CD4-positive, alpha-beta memory T cell (primary cell): ENCODE measurements at regions of chr7 and their contacts with region 1.

Region 1: DNA sequence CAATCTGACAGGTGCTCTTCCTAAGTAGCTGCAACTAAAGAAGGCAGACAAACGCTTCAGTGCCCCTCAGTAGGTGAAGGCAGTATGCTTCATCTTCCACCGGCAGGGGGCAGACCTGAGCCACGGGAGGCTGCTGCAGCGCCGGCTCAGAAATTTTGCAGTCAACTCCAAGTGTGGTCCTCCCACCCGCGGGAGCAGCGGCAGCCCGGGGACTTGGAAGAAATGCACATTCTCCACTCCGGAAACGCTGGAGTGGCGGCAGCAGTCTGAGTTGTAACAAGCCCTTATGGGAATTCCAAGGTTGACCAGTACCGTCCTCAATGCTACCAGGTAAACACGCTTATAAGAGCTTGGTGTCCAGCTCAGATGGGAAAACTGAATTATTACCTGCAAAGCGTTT is 3.4 kb downstream of the IGFBP3 start:
- DNase-seq: peak; percentile 50 to 64 (median 60)
- H3K4me3 ChIP-seq: no peak overlapping the region
- H3K4me3 Mint-ChIP-seq: peak overlapping the region in 4 of 8 donors; percentile 15 to 57 (median 36)
- H3K27ac ChIP-seq: no peak overlapping the region
- H3K27ac Mint-ChIP-seq: no peak overlapping the region
- H3K4me1 ChIP-seq: peaks cover 32% of the 10 kb centered on the region
- H3K4me1 Mint-ChIP-seq: peaks cover 7 to 45% (median 22%) of the 10 kb centered on the region in 4 donors
- H3K27me3 ChIP-seq: peaks cover 9% of the 10 kb centered on the region
- H3K27me3 Mint-ChIP-seq: peaks cover 22 to 30% of the 10 kb centered on the region in 2 donors

Region 2: DNA sequence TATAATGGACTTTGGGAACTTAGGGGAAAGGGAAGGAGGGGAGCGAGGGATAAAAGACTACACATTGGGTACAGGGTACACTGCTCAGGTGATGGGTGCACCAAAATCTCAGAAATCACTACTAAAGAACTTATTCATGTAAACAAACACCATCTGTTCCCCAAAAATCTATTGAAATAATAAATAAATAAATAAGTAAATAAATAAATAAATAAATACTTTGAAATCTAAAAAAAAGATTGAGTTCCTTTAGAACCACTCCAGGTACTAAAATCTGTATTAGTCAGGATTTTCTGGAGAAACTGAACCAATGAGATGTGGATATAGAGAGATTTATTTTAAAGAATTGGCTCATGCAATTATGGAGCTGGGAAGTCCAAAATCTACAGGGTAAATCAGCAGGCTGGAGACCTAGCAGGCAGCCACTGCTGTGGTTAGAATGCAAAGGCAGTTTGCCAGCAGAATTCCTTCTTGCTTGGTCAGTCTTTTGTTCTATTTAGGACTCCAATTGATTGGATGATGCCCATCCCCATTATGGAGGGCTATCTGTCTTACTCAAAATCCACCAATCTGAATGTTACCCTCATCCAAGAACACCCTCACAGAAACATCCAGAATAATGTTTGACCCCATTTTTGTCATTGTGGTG is 20.5 kb before region 1 on chr7:
- CTCF ChIA-PET with region 1: interaction called, 10 read pairs
- POLR2A ChIA-PET with region 1: no interaction called
- intact Hi-C with region 1: no loop called
- DNase-seq: no peak
- H3K4me3 ChIP-seq: no peak overlapping the region
- H3K4me3 Mint-ChIP-seq: no peak overlapping the region
- H3K27ac ChIP-seq: no peak overlapping the region
- H3K27ac Mint-ChIP-seq: no peak overlapping the region
- H3K4me1 ChIP-seq: no peaks in the 10 kb centered on the region
- H3K4me1 Mint-ChIP-seq: no peaks in the 10 kb centered on the region
- H3K27me3 ChIP-seq: no peaks in the 10 kb centered on the region
- H3K27me3 Mint-ChIP-seq: peaks cover 26 to 38% of the 10 kb centered on the region in 2 donors

Region 3: GRCh38 chr7:45938626-45939302 is 21.1 kb after region 1 on chr7:
- CTCF ChIA-PET with region 1: interaction called, 11 read pairs
- POLR2A ChIA-PET with region 1: interaction called, 10 read pairs
- intact Hi-C with region 1: loop called (anchors 2 kb)
- DNase-seq: no peak
- H3K4me3 ChIP-seq: no peak overlapping the region
- H3K4me3 Mint-ChIP-seq: peak overlapping the region in 3 of 8 donors; percentile 17 to 74 (median 30)
- H3K27ac ChIP-seq: no peak overlapping the region
- H3K27ac Mint-ChIP-seq: peak overlapping the region in 1 of 7 donors; percentile 33
- H3K4me1 ChIP-seq: peaks cover 8% of the 10 kb centered on the region
- H3K4me1 Mint-ChIP-seq: peaks cover 11 to 36% (median 27%) of the 10 kb centered on the region in 4 donors
- H3K27me3 ChIP-seq: no peaks in the 10 kb centered on the region
- H3K27me3 Mint-ChIP-seq: peaks cover 2 to 4% of the 10 kb centered on the region in 2 donors

Region 4: GRCh38 chr7:46003896-46004875 is 86.5 kb after region 1 on chr7:
- CTCF ChIA-PET with region 1: no interaction called
- POLR2A ChIA-PET with region 1: no interaction called
- intact Hi-C with region 1: no loop called
- DNase-seq: no peak
- H3K4me3 ChIP-seq: no peak overlapping the region
- H3K4me3 Mint-ChIP-seq: no peak overlapping the region
- H3K27ac ChIP-seq: no peak overlapping the region
- H3K27ac Mint-ChIP-seq: no peak overlapping the region
- H3K4me1 ChIP-seq: no peaks in the 10 kb centered on the region
- H3K4me1 Mint-ChIP-seq: no peaks in the 10 kb centered on the region
- H3K27me3 ChIP-seq: no peaks in the 10 kb centered on the region
- H3K27me3 Mint-ChIP-seq: no peaks in the 10 kb centered on the region

Region 5: GRCh38 chr7:46352004-46352954 is 434.6 kb after region 1 on chr7:
- CTCF ChIA-PET with region 1: interaction called, 10 read pairs
- POLR2A ChIA-PET with region 1: no interaction called
- intact Hi-C with region 1: no loop called
- DNase-seq: peak in 2 of 5 donors; percentile 3 to 18
- H3K4me3 ChIP-seq: no peak overlapping the region
- H3K4me3 Mint-ChIP-seq: no peak overlapping the region
- H3K27ac ChIP-seq: no peak overlapping the region
- H3K27ac Mint-ChIP-seq: no peak overlapping the region
- H3K4me1 ChIP-seq: no peaks in the 10 kb centered on the region
- H3K4me1 Mint-ChIP-seq: no peaks in the 10 kb centered on the region
- H3K27me3 ChIP-seq: no peaks in the 10 kb centered on the region
- H3K27me3 Mint-ChIP-seq: no peaks in the 10 kb centered on the region

Region 6: GRCh38 chr7:47088329-47089067 is 1170.8 kb after region 1 on chr7:
- CTCF ChIA-PET with region 1: interaction called, 12 read pairs
- POLR2A ChIA-PET with region 1: no interaction called
- intact Hi-C with region 1: loop called (anchors 1 kb)
- DNase-seq: peak; percentile 2 to 36 (median 5)
- H3K4me3 ChIP-seq: no peak overlapping the region
- H3K4me3 Mint-ChIP-seq: no peak overlapping the region
- H3K27ac ChIP-seq: no peak overlapping the region
- H3K27ac Mint-ChIP-seq: peak overlapping the region in 1 of 7 donors; percentile 33
- H3K4me1 ChIP-seq: no peaks in the 10 kb centered on the region
- H3K4me1 Mint-ChIP-seq: no peaks in the 10 kb centered on the region
- H3K27me3 ChIP-seq: no peaks in the 10 kb centered on the region
- H3K27me3 Mint-ChIP-seq: peaks cover 0 to 1% of the 10 kb centered on the region in 2 donors

Region 7: GRCh38 chr7:47818796-47819606 is 1901.3 kb after region 1 on chr7:
- CTCF ChIA-PET with region 1: no interaction called
- POLR2A ChIA-PET with region 1: no interaction called
- intact Hi-C with region 1: loop called (anchors 5 kb)
- DNase-seq: no peak
- H3K4me3 ChIP-seq: no peak overlapping the region
- H3K4me3 Mint-ChIP-seq: no peak overlapping the region
- H3K27ac ChIP-seq: no peak overlapping the region
- H3K27ac Mint-ChIP-seq: no peak overlapping the region
- H3K4me1 ChIP-seq: no peaks in the 10 kb centered on the region
- H3K4me1 Mint-ChIP-seq: no peaks in the 10 kb centered on the region
- H3K27me3 ChIP-seq: no peaks in the 10 kb centered on the region
- H3K27me3 Mint-ChIP-seq: no peaks in the 10 kb centered on the region